ENCODE measurements at regions of chr9 and their contacts with region 1.

Region 1: GRCh38 chr9:16207161-16207560 is 654.3 kb downstream of the CCDC171 start:
- DNase-seq: no peak
- H3K4me3 ChIP-seq: no peak overlapping the region
- H3K27ac ChIP-seq: no peak overlapping the region
- H3K4me1 ChIP-seq: no peaks in the 10 kb centered on the region
- H3K27me3 ChIP-seq: no peaks in the 10 kb centered on the region
- CTCF ChIP-seq: no peak

Region 2: GRCh38 chr9:16145196-16145950 is 61.8 kb before region 1 on chr9:
- intact Hi-C with region 1: loop called (anchors 10 kb)
- DNase-seq: no peak
- H3K4me3 ChIP-seq: no peak overlapping the region
- H3K27ac ChIP-seq: no peak overlapping the region
- H3K4me1 ChIP-seq: no peaks in the 10 kb centered on the region
- H3K27me3 ChIP-seq: no peaks in the 10 kb centered on the region
- CTCF ChIP-seq: no peak

Region 3: GRCh38 chr9:16275795-16276624 is 68.8 kb after region 1 on chr9:
- intact Hi-C with region 1: no loop called
- DNase-seq: no peak
- H3K4me3 ChIP-seq: no peak overlapping the region
- H3K27ac ChIP-seq: no peak overlapping the region
- H3K4me1 ChIP-seq: no peaks in the 10 kb centered on the region
- H3K27me3 ChIP-seq: no peaks in the 10 kb centered on the region
- CTCF ChIP-seq: no peak